ENCODE measurements at regions of chr14 and their contacts with region 1.

Region 1: DNA sequence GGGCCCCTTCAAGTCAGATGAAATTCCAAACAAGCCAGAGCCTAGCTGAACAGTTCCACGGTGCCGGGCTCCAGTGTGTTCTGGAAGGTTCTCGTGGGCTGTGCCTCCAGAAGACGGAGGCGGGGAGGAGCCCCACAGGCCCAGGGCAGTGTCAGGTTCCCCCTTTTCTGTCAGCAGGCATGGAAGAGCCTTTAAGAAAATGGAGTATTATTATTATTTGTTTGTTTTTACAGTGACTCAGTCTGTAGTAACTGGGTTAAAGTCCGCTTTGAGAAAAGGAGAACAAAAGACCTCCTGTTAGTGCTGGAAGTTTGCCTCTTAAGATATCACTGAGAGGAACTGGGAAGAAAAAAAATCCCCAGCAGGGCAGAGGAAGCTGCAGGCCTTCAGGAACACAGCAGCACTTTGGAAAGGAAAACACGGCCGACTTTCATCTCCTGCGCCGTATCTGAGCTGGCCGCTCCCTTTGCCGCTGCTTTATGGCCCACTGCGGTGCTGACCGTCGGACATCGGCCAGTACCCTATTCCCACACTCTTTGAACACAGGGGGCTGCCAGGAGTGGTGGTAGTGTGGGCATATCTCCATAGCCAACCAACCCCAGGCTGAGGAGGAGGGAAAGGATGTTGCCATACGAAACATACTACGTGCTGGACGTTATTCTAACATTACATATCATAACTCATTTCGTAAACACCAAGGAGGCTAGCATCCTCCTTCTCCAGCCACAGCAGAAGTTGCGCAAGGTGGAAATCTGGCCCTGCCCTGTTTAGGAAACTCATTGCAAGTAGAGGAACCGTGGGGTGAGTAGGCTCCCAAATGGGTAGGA is 194.0 kb downstream of the ZFP36L1 start:
- H3K4me3 Mint-ChIP-seq: peak overlapping the region; percentile 70
- H3K27ac Mint-ChIP-seq: peak overlapping the region; percentile 96
- H3K4me1 Mint-ChIP-seq: peaks cover 70% of the 10 kb centered on the region
- H3K27me3 Mint-ChIP-seq: no peaks in the 10 kb centered on the region

Region 2: DNA sequence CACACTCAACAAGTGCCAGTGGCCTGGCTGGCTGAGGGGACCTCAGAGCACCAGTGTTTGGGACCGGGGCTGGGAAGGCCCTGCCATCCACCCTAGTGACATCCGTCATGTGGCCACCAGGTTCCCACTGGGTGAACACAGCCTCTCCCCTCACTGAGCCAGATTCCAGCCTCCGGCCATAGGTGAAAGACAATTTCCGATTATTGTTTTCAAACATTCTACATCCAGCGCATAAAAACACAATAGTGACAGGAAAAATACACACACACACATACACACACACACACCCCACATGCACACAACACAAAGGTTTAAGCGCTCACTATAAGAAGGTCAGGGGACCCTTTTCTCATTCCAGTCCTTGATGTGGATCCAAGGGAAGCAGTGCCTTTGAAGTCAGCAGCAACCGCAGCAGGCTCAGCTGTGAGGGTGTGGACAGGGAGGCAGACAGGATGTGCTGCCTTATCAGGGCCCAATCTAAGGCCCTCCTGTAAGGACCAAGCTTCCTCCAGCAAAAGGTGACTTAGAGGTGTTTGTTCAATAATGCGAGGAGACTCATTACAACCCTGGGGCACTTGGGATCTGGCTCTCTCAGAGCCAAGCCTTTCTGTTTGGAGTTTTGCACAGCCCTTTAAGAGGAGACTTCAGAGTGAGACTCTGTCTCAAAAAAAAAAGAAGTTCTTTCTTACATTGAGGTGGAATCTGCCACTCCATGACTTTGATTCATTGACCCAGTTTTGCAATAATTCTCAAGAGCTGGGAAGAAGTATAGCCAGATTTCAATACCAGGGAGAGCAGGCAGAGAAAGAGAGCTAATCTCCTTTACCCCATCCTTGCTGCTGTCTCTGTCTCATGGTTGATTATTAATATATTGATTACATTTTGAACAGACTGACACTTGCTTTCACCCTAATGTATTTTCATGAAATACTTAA is 33.7 kb before region 1 on chr14:
- intact Hi-C with region 1: loop called (anchors 5 kb)
- H3K4me3 Mint-ChIP-seq: no peak overlapping the region
- H3K27ac Mint-ChIP-seq: peak overlapping the region; percentile 48
- H3K4me1 Mint-ChIP-seq: peaks cover 92% of the 10 kb centered on the region
- H3K27me3 Mint-ChIP-seq: no peaks in the 10 kb centered on the region

Region 3: GRCh38 chr14:68577827-68578541 is 20.9 kb before region 1 on chr14:
- intact Hi-C with region 1: loop called (anchors 1 kb)
- H3K4me3 Mint-ChIP-seq: peak overlapping the region; percentile 55
- H3K27ac Mint-ChIP-seq: peak overlapping the region; percentile 96
- H3K4me1 Mint-ChIP-seq: peaks cover 78% of the 10 kb centered on the region
- H3K27me3 Mint-ChIP-seq: no peaks in the 10 kb centered on the region

Region 4: DNA sequence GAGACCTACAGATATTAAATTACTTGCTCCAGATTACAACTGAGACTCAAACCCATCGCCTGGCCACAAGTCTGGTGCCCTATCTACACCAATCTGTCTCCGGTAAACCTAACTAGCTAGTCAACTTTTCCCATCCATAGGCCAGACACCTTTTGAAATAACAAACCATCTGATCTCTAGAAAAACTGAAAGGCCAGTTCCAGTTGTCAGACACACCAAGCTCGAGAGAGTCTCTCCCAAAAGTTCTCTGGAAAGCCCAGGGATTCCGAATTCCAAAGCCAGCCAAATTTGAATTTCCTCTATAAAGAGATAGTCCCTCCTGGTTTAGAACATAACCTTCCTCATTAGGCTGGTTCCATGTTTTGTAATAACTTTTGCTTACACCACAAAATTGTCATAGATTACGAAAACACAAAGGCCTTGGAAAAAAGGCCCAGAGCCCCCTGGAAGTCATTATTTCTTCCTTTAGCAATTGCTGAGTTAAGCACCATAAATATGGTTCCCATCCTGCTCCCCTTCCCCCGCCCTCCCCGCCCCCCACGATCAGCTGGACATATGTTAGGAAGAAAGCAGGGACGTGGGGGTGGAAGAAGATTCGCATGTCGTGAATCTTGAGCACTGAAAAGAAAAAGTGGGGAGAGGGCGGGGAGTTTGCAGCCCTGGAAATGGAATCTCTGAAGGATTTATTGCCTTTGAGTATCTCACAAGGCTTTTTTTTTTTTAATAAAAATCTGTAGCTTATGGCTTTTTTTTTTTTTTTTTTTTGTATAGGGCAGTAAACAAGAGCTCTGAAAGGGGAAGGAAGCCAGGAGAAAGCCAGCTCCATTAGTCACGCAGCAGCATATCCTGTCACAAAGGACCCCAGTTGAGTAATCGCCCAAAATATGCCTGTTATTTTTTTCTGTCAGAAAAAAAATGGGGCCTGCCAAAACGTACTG is 83.6 kb after region 1 on chr14:
- intact Hi-C with region 1: loop called (anchors 5 kb)
- H3K4me3 Mint-ChIP-seq: peak overlapping the region; percentile 49
- H3K27ac Mint-ChIP-seq: peak overlapping the region; percentile 99
- H3K4me1 Mint-ChIP-seq: peaks cover 91% of the 10 kb centered on the region
- H3K27me3 Mint-ChIP-seq: no peaks in the 10 kb centered on the region

Measured in dendritic cell treated with granulocyte-macrophage colony-stimulating factor and Interleukin-4, amounts not matched to agents 40 ng/mL and 50 ng/mL, for 4 days (primary cell).